Activated CD4-positive, alpha-beta T cell treated with anti-CD3 and anti-CD28 coated beads, Interleukin-2, amount 10 ng/mL, durations not matched to agents 24 days and 14 days (primary cell): ENCODE measurements at regions of chr9 and their contacts with region 1.

Region 1: DNA sequence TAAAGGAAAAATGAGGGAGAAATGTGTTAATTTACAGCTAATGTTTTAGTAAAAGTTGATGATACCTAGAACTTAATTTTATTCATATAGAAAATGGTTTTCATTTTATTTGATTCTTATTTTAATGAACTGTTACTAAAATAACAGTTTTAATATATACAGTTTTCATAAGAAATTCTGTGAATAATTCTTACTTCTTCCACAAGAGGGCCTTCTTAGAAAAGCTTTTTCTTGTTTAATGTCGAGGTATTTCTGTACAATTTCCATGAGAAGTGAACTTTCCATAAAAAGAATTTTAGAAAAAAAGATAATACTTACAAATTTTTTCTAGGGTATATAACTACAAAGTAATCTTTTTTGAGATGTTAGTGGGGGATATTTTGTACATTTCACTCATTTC is 73.9 kb downstream of the KLF9 start:
- DNase-seq: no peak
- H3K4me3 Mint-ChIP-seq: no peak overlapping the region
- H3K27ac Mint-ChIP-seq: no peak overlapping the region
- H3K4me1 Mint-ChIP-seq: peaks cover 4% of the 10 kb centered on the region
- H3K27me3 Mint-ChIP-seq: no peaks in the 10 kb centered on the region

Region 2: DNA sequence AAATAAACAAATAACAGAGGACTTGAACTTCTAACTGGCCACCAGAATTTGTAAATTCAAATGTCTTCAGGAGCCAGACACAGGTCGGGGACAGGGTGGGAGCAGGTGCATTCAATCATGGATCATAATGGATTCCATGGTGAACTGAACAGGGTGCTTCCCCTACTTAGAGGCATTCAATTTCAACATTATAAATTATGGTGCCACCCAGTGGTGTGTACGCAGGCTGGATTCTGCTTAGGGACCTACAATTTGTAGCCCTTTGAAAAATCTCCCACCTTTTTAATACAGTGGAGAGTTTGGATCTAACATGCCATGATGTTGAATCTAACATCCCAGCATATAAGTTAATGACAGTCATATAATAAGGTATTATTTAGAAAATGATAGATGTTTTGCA is 51.6 kb after region 1 on chr9:
- intact Hi-C with region 1: loop called (anchors 5 kb)
- DNase-seq: no peak
- H3K4me3 Mint-ChIP-seq: no peak overlapping the region
- H3K27ac Mint-ChIP-seq: no peak overlapping the region
- H3K4me1 Mint-ChIP-seq: peaks cover 44% of the 10 kb centered on the region
- H3K27me3 Mint-ChIP-seq: no peaks in the 10 kb centered on the region

Region 3: DNA sequence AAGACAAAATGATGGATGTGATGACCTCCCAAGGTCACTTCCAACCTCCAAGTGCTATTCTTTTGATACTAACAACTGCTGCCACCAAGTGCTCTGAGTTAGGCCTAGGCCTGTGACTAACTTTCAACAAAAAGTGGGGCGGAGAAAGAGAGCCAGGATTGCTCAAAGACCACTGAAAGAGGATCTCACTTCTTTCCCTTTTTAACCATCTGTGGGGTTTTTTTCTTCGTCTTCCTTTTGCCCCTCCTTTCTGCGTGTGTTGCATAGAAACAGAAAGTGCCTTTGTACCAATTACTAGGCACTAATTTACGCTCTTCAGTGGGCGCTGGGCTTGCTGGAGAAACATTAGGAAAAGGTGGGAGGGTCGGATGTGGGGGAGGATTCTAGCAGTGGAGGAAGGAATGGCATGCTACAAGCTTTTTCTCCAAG is 65.9 kb after region 1 on chr9:
- intact Hi-C with region 1: loop called (anchors 2 kb)
- DNase-seq: peak; percentile 75
- H3K4me3 Mint-ChIP-seq: peak overlapping the region; percentile 79
- H3K27ac Mint-ChIP-seq: peak overlapping the region; percentile 90
- H3K4me1 Mint-ChIP-seq: peaks cover 58% of the 10 kb centered on the region
- H3K27me3 Mint-ChIP-seq: no peaks in the 10 kb centered on the region

Region 4: GRCh38 chr9:70484210-70485130 is 143.9 kb after region 1 on chr9:
- intact Hi-C with region 1: loop called (anchors 5 kb)
- DNase-seq: peak; percentile 60
- H3K4me3 Mint-ChIP-seq: no peak overlapping the region
- H3K27ac Mint-ChIP-seq: no peak overlapping the region
- H3K4me1 Mint-ChIP-seq: peaks cover 5% of the 10 kb centered on the region
- H3K27me3 Mint-ChIP-seq: no peaks in the 10 kb centered on the region